ENCODE measurements at regions of chr6 and their contacts with region 1.

Region 1: GRCh38 chr6:45930420-45931040 is 85.1 kb downstream of the CLIC5 start:
- DNase-seq: peak; percentile 58 to 82
- ATAC-seq: peak; percentile 85 to 96 (median 92)
- H3K4me3 ChIP-seq: no peak overlapping the region
- H3K27ac ChIP-seq: peak overlapping the region; percentile 33
- H3K4me1 ChIP-seq: peaks cover 8% of the 10 kb centered on the region
- H3K27me3 ChIP-seq: no peaks in the 10 kb centered on the region
- CTCF ChIP-seq: peak; percentile 98

Region 2: GRCh38 chr6:45667300-45667699 is 263.2 kb before region 1 on chr6:
- intact Hi-C with region 1: no loop called
- DNase-seq: no peak
- ATAC-seq: no peak
- H3K4me3 ChIP-seq: no peak overlapping the region
- H3K27ac ChIP-seq: no peak overlapping the region
- H3K4me1 ChIP-seq: peaks cover 8% of the 10 kb centered on the region
- H3K27me3 ChIP-seq: peaks cover 0 to 39% (median 2%) of the 10 kb centered on the region in 3 donors
- CTCF ChIP-seq: no peak

Region 3: GRCh38 chr6:46011241-46012085 is 80.9 kb after region 1 on chr6:
- intact Hi-C with region 1: loop called (anchors 2 to 5 kb)
- DNase-seq: no peak
- ATAC-seq: peak in 3 of 4 donors; percentile 1 to 5 (median 1)
- H3K4me3 ChIP-seq: peak overlapping the region; percentile 90
- H3K27ac ChIP-seq: peak overlapping the region; percentile 99
- H3K4me1 ChIP-seq: peaks cover 69% of the 10 kb centered on the region
- H3K27me3 ChIP-seq: no peaks in the 10 kb centered on the region
- CTCF ChIP-seq: no peak

Region 4: GRCh38 chr6:46023216-46023915 is 92.8 kb after region 1 on chr6:
- intact Hi-C with region 1: no loop called
- DNase-seq: no peak
- ATAC-seq: peak; percentile 59 to 92 (median 72)
- H3K4me3 ChIP-seq: no peak overlapping the region
- H3K27ac ChIP-seq: peak overlapping the region; percentile 17
- H3K4me1 ChIP-seq: peaks cover 16% of the 10 kb centered on the region
- H3K27me3 ChIP-seq: no peaks in the 10 kb centered on the region
- CTCF ChIP-seq: no peak

Region 5: DNA sequence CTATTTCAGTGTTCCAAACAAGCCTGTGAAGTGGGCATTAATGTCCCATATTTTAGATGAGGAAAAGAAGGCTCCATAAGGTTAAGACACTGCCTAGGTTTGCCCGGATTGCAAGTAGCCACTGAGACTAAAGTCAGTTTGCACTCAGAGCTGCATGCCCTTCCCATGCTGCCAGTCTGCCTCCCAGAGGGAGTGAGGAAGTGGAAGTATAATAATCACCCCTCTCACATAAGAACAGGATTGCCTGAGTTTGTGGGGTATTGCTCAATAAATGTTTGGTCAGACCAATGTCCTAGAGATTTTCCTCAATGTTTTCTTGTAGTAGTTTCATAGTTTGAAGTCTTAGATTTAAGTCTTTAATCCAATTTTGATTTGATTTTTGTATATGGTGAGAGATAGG is 129.1 kb after region 1 on chr6:
- intact Hi-C with region 1: loop called in 1 of 2 experiments (anchors 5 kb)
- DNase-seq: no peak
- ATAC-seq: peak in 3 of 4 donors; percentile 63 to 77 (median 77)
- H3K4me3 ChIP-seq: no peak overlapping the region
- H3K27ac ChIP-seq: no peak overlapping the region
- H3K4me1 ChIP-seq: peaks cover 6% of the 10 kb centered on the region
- H3K27me3 ChIP-seq: no peaks in the 10 kb centered on the region
- CTCF ChIP-seq: no peak